Mammary epithelial cell (primary cell): ENCODE measurements at regions of chr22 and their contacts with region 1.

Region 1: GRCh38 chr22:21641789-21642583 is at the start of gene SDF2L1:
- DNase-seq: peak; percentile 99
- H3K4me3 ChIP-seq: peak within 1 kb of the TSS; percentile 66 to 92 (median 82)
- H3K27ac ChIP-seq: peak within 1 kb of the TSS; percentile 63
- H3K4me1 ChIP-seq: peaks cover 17% of the 10 kb centered on the region
- H3K27me3 ChIP-seq: no peaks in the 10 kb centered on the region
- CTCF ChIP-seq: no peak
- total RNA-seq, gene SDF2L1: 13.3 to 52.0 TPM

Region 2: GRCh38 chr22:20507253-20508066 is 1134.5 kb before region 1 on chr22 and contains the start of gene MED15:
- CTCF ChIA-PET with region 1: interaction called, 22 read pairs
- dilution Hi-C with region 1: no loop called
- in situ Hi-C with region 1: no loop called
- intact Hi-C with region 1: no loop called
- DNase-seq: peak; percentile 86
- H3K4me3 ChIP-seq: peak within 1 kb of the TSS; percentile 70 to 96 (median 84)
- H3K27ac ChIP-seq: peak within 1 kb of the TSS; percentile 87
- H3K4me1 ChIP-seq: peaks cover 44% of the 10 kb centered on the region
- H3K27me3 ChIP-seq: no peaks in the 10 kb centered on the region
- CTCF ChIP-seq: no peak
- total RNA-seq, gene MED15: 34.3 to 138 TPM

Region 3: GRCh38 chr22:21567456-21568346 is 74.3 kb before region 1 on chr22 and contains the start of gene UBE2L3:
- CTCF ChIA-PET with region 1: no interaction called
- dilution Hi-C with region 1: no loop called
- in situ Hi-C with region 1: no loop called
- intact Hi-C with region 1: loop called (anchors 2 kb)
- DNase-seq: peak; percentile 80
- H3K4me3 ChIP-seq: peak within 1 kb of the TSS; percentile 78 to 99 (median 96)
- H3K27ac ChIP-seq: peak within 1 kb of the TSS; percentile 89
- H3K4me1 ChIP-seq: peaks cover 14% of the 10 kb centered on the region
- H3K27me3 ChIP-seq: no peaks in the 10 kb centered on the region
- CTCF ChIP-seq: no peak
- total RNA-seq, gene UBE2L3: 37.5 to 60.1 TPM

Region 4: DNA sequence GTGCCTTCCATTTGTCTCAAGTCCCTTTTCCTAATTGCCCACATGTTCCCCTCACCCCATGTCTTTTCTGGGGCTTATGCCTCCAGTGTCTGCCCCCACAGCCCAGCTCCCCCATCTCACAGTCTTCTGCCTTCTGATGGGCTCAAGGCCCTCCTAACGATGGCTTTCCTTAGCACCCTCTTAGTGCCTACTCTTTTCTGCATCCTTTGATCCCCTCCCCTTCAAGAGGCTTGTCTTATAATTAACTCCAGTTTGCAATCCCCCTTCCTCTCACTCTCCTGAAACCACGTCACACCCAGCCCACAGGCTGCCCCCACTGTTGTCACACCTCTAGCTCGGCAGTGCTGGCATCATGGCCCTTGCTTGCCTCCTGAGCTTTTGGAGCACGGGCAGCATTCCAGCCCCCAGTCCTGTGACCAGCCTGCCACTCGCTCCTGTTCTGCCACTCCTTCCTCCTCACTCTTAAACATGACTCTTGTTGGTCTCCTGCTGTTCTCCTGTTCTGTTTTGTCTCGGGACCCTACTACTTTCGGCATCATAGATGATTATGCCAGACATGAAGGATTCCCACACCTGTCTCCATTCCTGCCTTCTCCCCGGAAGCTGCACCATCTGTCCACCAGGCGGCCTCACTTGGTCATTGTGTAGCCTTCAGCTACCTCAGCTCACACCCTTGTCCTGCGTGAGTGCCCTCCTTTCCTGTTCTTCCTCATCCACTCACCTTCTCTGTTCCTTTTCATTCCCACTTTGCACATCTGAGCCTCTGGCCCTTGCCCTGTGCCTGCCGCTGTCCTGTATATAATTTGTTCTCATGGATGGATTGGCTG is 48.4 kb before region 1 on chr22:
- CTCF ChIA-PET with region 1: interaction called, 3 read pairs
- dilution Hi-C with region 1: no loop called
- in situ Hi-C with region 1: no loop called
- intact Hi-C with region 1: loop called (anchors 10 kb)
- DNase-seq: no peak
- H3K4me3 ChIP-seq: no peak overlapping the region
- H3K27ac ChIP-seq: no peak overlapping the region
- H3K4me1 ChIP-seq: peaks cover 15% of the 10 kb centered on the region
- H3K27me3 ChIP-seq: no peaks in the 10 kb centered on the region
- CTCF ChIP-seq: peak; percentile 45 to 55

Region 5: DNA sequence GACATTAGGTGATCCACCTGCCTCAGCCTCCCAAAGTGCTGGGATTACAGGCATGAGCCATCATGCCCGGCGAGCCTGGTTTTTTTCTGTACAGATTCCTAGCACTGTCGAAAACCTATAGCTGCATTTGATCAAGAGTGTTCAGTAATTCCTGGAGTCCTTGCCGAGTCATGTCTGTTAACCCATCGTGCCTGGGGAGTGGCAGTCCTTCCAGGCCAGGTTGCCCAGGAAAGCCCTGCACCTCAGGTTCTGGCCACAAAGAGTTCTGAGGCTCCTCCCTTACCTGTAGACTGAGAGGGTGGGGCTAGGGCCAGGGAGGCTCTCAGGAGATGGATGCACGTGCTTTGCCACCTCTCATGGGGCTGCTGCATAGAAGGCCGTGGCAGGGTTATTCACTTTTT is 29.1 kb before region 1 on chr22:
- CTCF ChIA-PET with region 1: no interaction called
- dilution Hi-C with region 1: no loop called
- in situ Hi-C with region 1: no loop called
- intact Hi-C with region 1: no loop called
- DNase-seq: peak; percentile 26
- H3K4me3 ChIP-seq: no peak overlapping the region
- H3K27ac ChIP-seq: no peak overlapping the region
- H3K4me1 ChIP-seq: no peaks in the 10 kb centered on the region
- H3K27me3 ChIP-seq: no peaks in the 10 kb centered on the region
- CTCF ChIP-seq: no peak

Region 6: GRCh38 chr22:21629262-21630149 is 12.5 kb before region 1 on chr22 and contains the start of gene YDJC:
- CTCF ChIA-PET with region 1: interaction called, 9 read pairs
- dilution Hi-C with region 1: no loop called
- in situ Hi-C with region 1: no loop called
- intact Hi-C with region 1: loop called (anchors 1 kb)
- DNase-seq: peak; percentile 89
- H3K4me3 ChIP-seq: peak within 1 kb of the TSS; percentile 79 to 100 (median 98)
- H3K27ac ChIP-seq: peak within 1 kb of the TSS; percentile 72
- H3K4me1 ChIP-seq: peaks cover 16% of the 10 kb centered on the region
- H3K27me3 ChIP-seq: no peaks in the 10 kb centered on the region
- CTCF ChIP-seq: peak; percentile 56 to 77
- total RNA-seq, gene YDJC: 33.8 to 47.6 TPM

Region 7: DNA sequence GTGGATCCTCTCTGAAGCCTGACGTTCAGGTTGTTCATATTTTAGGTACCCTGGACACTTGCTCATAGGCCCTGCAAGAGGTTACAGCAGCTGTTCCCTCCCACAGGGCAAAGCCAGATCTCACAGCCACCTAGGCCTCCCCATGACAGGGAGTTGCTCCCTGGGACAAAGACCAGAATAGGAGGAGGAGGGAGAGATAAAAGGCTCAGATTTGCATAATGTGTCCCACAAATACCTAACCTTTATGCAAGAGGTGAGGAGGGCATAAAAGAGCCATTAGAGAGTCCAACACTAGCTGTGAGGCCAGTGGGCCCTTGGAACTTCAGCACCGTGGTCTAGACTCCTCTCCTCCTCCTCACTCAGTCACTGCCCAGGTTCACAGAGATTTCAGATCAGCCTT is 832.7 kb after region 1 on chr22:
- CTCF ChIA-PET with region 1: interaction called, 12 read pairs
- dilution Hi-C with region 1: no loop called
- in situ Hi-C with region 1: no loop called
- intact Hi-C with region 1: no loop called
- DNase-seq: no peak
- H3K4me3 ChIP-seq: no peak overlapping the region
- H3K27ac ChIP-seq: no peak overlapping the region
- H3K4me1 ChIP-seq: no peaks in the 10 kb centered on the region
- H3K27me3 ChIP-seq: no peaks in the 10 kb centered on the region
- CTCF ChIP-seq: no peak